Activated naive CD4-positive, alpha-beta T cell treated with anti-CD3 and anti-CD28 coated beads for 36 hours (primary cell): ENCODE measurements at regions of chr16 and their contacts with region 1.

Region 1: DNA sequence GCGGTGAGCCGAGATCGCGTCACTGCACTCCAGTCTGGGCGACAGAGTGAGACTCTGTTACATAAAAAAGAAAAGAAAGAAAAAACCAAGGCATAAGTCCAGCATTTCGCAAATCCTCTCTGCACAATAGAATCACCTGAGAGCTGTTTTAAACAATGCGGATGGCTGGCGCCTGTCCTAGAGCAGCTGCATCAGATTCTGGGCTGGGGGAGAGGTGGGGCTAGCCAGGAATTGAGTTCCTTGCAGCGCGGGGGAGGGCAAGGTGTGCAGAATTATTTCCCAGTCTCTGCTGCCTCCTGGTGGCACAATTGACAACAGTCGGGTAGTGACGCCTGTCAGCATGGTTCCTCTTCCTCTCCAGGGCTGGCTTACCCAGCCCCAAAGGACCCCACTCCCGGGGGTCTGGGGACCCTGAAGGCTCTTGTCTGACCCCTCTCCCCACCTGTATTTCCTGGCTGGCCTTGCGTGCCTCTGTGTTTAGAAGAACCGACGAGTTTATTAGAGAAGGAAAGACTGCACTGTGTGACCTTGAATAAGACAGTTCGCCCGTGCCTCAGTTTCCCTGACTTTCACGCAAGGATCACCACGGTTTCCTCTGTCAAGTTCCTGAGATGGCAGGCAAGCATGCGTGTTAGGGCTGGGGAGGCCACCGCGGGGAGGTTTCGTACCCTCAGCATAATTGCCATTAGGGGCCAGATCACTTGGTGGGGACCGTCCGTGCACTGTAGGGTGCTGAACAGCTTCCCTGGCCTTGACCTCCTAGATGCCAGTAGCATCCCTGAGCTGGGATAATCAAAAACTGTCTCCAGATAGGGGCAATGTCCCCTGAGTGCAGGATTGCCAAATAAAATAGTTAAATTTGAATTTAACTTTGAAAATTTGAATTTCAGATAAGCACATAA is 41.0 kb upstream of the PLCG2 start:
- DNase-seq: peak; percentile 97
- H3K4me3 Mint-ChIP-seq: peak overlapping the region; percentile 61
- H3K27ac Mint-ChIP-seq: peak overlapping the region; percentile 77
- H3K4me1 Mint-ChIP-seq: peaks cover 12% of the 10 kb centered on the region
- H3K27me3 Mint-ChIP-seq: no peaks in the 10 kb centered on the region

Region 2: DNA sequence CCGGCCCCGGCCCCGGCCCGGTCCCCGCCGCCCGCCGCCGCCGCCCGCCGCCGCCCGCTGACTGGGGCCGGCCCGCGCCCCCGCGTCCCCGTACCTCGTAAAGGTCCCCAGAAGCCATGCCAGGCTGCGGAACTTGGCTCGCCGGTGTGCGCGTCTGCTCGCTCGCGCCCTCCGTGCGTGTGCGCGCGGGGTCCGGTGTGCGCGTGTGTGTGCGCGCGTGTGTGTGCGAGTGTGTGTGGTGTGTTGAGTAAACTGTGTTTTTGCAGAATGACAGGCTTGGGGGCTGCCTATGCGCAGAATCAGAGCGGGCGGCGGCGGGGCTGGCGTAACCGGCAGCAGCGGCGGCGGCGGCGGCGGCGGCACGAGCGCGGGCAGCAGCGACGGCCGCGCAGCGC is 934.1 kb before region 1 on chr16:
- CTCF ChIA-PET with region 1: no interaction called
- intact Hi-C with region 1: loop called (anchors 10 kb)
- DNase-seq: peak; percentile 63
- H3K4me3 Mint-ChIP-seq: peak overlapping the region; percentile 88
- H3K27ac Mint-ChIP-seq: peak overlapping the region; percentile 80
- H3K4me1 Mint-ChIP-seq: peaks cover 31% of the 10 kb centered on the region
- H3K27me3 Mint-ChIP-seq: peaks cover 4% of the 10 kb centered on the region

Region 3: GRCh38 chr16:81035398-81035974 is 702.6 kb before region 1 on chr16 and contains the start of gene ATMIN:
- CTCF ChIA-PET with region 1: interaction called, 3 read pairs
- intact Hi-C with region 1: loop called (anchors 1 kb)
- DNase-seq: peak; percentile 85
- H3K4me3 Mint-ChIP-seq: peak within 1 kb of the TSS; percentile 81
- H3K27ac Mint-ChIP-seq: peak within 1 kb of the TSS; percentile 37
- H3K4me1 Mint-ChIP-seq: peaks cover 34% of the 10 kb centered on the region
- H3K27me3 Mint-ChIP-seq: no peaks in the 10 kb centered on the region
- total RNA-seq, gene ATMIN: 16.6 to 18.9 TPM

Region 4: GRCh38 chr16:81261049-81261648 is 477.0 kb before region 1 on chr16:
- CTCF ChIA-PET with region 1: interaction called, 3 read pairs
- intact Hi-C with region 1: loop called (anchors 1 kb)
- DNase-seq: peak; percentile 45
- H3K4me3 Mint-ChIP-seq: no peak overlapping the region
- H3K27ac Mint-ChIP-seq: no peak overlapping the region
- H3K4me1 Mint-ChIP-seq: no peaks in the 10 kb centered on the region
- H3K27me3 Mint-ChIP-seq: no peaks in the 10 kb centered on the region

Region 5: GRCh38 chr16:81444448-81445121 is 293.6 kb before region 1 on chr16 and contains the start of gene CMIP:
- CTCF ChIA-PET with region 1: no interaction called
- intact Hi-C with region 1: no loop called
- DNase-seq: peak; percentile 81
- H3K4me3 Mint-ChIP-seq: peak within 1 kb of the TSS; percentile 75
- H3K27ac Mint-ChIP-seq: peak within 1 kb of the TSS; percentile 57
- H3K4me1 Mint-ChIP-seq: peaks cover 33% of the 10 kb centered on the region
- H3K27me3 Mint-ChIP-seq: no peaks in the 10 kb centered on the region
- total RNA-seq, gene CMIP: 28.6 to 28.8 TPM

Region 6: DNA sequence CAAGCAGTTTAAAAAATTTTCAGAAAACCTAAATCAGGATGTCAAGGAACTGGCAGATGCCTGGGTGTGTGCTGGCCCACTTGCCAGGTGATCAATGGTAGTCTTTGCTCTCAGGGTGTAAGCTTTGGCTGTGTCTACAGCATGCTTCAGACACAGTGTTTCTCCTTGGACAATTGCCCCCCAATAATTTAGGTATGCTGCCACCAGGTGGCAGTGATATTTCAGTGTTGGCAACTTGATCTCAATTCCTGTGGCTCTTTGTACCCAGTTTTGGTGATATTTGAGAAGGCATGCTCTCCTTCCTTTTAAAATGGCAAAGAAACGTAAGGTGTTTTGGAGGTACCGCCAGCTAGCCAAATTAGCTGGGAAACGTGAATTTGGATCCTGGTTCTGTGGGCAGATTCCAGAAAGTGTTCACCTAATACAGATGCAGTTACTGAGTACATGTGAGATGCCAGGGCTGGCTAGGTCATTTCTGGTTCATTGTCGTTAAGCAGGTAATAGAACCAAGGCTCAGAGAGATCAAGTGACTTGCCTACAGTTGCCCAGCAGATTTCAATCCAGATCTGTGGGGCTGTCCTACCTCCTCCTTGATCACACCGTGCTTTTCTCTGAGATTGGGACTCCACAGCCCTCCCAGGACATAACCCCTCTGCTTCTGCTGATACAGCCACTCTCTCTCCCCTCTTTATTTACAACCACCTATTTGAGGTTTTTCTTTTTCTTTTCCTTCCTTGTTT is 114.6 kb before region 1 on chr16:
- CTCF ChIA-PET with region 1: interaction called, 5 read pairs
- intact Hi-C with region 1: loop called (anchors 1 kb)
- DNase-seq: peak; percentile 83
- H3K4me3 Mint-ChIP-seq: no peak overlapping the region
- H3K27ac Mint-ChIP-seq: peak overlapping the region; percentile 22
- H3K4me1 Mint-ChIP-seq: peaks cover 5% of the 10 kb centered on the region
- H3K27me3 Mint-ChIP-seq: no peaks in the 10 kb centered on the region